Posterior vena cava (tissue), 2 donors: ENCODE measurements at regions of chr10 and their contacts with region 1.

Region 1: GRCh38 chr10:114052255-114052654 is 8.6 kb downstream of the ADRB1 start:
- DNase-seq: no peak

Region 2: DNA sequence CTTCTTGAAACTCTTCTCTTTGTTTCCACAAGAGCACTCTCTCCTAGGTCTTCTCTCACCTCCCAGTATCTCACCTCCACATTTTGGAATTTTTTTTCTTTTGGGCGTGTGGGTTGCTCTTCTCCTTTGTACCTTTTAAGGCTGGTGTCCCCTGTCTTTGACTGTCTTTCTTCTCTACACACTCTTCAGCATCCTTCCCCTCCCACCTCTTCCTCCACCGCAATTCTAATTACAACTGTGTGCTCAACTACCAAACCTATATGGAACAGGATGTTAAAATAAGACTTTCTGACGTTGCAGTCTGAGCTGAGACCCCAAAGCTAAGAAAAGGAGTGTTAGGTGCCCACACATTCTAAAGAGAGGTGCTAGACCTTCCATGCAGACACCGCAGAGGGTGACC is 22.6 kb before region 1 on chr10:
- intact Hi-C with region 1: loop called in 1 of 2 experiments (anchors 1 kb)
- DNase-seq: no peak

Region 3: GRCh38 chr10:114083040-114083439 is 30.8 kb after region 1 on chr10:
- intact Hi-C with region 1: no loop called
- DNase-seq: no peak